ENCODE measurements at regions of chr1 and their contacts with region 1.

Region 1: DNA sequence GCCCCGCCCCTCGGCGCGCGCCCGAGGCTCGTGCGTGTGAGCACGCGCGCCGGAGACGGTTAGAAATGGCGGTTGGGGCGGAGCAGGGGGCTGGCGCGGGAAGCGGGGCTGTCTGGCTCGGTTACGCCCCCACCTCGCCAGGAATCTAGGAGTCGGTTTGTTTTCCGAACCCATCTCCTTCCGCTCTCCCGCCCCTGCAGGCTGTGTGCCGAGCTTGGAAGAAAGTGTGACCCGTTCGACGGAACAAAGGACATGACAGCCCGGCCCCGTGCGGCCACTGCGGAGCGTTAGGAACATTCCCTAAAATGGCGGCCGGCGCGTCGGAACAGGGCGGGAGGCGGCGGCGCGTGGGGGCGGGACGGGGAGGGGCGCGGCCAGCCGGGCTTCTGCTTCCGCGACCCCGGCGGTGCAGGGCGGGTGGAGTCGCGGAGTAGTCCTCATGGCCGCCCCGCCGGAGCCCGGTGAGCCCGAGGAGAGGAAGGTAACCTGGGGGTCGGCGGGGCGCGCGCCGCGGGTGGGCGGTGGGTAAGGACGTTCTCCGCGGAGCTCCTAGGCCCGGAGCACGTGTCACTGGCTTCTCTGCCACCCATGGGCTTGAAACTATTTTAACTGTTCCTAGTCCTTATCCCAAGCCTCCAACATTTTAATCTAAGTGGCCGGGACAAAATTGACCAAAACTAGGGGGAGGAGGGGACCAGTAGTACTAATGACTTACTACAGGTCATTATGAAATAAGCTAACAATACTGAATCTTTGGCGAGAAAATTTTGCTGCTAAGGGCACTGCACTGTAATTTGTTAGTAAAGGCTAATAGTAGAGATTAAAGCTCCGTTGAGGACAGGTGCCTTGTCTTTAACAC is at the start of gene COX20:
- DNase-seq: peak; percentile 70 to 94
- H3K4me3 ChIP-seq: peak within 1 kb of the TSS; percentile 75 to 87 (median 81)
- H3K27ac ChIP-seq: peak within 1 kb of the TSS; percentile 100
- H3K4me1 ChIP-seq: peaks cover 0 to 3% (median under 1%) of the 10 kb centered on the region in 4 experiments; a peak in 4 of 7 replicates
- H3K27me3 ChIP-seq: no peaks in the 10 kb centered on the region
- CTCF ChIP-seq: no peak
- EP300 ChIP-seq: no peak; a peak in 1 of 3 replicates
- POLR2A ChIP-seq: peak; percentile 66 to 94
- RAD21 ChIP-seq: peak in 1 of 2 experiments; percentile 12; a peak in 1 of 4 replicates
- total RNA-seq, gene COX20: 28.8 and 33.6 TPM in 2 replicates

Region 2: DNA sequence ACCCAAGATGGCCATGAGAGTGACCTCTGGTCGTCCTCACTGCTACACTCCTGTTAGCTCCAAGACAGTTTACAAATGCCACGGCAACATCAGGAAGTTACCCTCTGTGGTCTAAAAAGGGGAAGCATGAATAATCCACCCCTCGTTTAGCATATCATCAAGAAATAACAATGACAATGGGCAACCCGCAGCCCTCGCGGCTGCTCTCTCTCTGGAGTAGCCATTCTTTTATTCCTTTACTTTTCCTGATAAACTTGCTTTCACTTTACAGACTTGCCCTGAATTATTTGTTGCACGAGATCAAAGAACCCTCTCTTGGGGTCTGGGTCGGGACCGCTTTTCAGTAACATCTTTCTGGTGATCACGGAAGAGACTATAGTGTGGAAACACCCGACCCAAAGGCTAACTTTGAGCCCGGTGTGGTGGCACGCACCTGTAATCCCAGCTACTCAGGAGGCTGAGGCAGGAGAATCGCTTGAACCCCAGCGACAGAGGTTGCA is 19.9 kb before region 1 on chr1:
- CTCF ChIA-PET with region 1: no interaction called
- POLR2A ChIA-PET with region 1: interaction called, 178 read pairs
- DNase-seq: peak in 1 of 2 experiments; percentile 64
- H3K4me3 ChIP-seq: peak overlapping the region; percentile 16 to 59 (median 40)
- H3K27ac ChIP-seq: peak overlapping the region; percentile 69
- H3K4me1 ChIP-seq: peaks cover 1 to 11% (median 7%) of the 10 kb centered on the region in 4 experiments
- H3K27me3 ChIP-seq: no peaks in the 10 kb centered on the region
- CTCF ChIP-seq: no peak
- EP300 ChIP-seq: peak in 1 of 2 experiments; percentile 32; a peak in 1 of 3 replicates
- POLR2A ChIP-seq: peak; percentile 50 to 55
- RAD21 ChIP-seq: no peak

Region 3: GRCh38 chr1:244849189-244849866 is 13.8 kb after region 1 on chr1:
- CTCF ChIA-PET with region 1: interaction called, 11 read pairs
- POLR2A ChIA-PET with region 1: interaction called, 677 read pairs
- DNase-seq: no peak
- H3K4me3 ChIP-seq: no peak overlapping the region
- H3K27ac ChIP-seq: no peak overlapping the region
- H3K4me1 ChIP-seq: no peaks in the 10 kb centered on the region
- H3K27me3 ChIP-seq: no peaks in the 10 kb centered on the region
- CTCF ChIP-seq: no peak
- EP300 ChIP-seq: no peak
- POLR2A ChIP-seq: peak in 1 of 2 experiments; percentile 12; a peak in 1 of 3 replicates
- RAD21 ChIP-seq: no peak

Region 4: GRCh38 chr1:244864253-244865027 is 28.9 kb after region 1 on chr1 and contains the start of gene HNRNPU:
- CTCF ChIA-PET with region 1: interaction called, 3 read pairs
- POLR2A ChIA-PET with region 1: interaction called, 677 read pairs
- DNase-seq: peak; percentile 91 to 96
- H3K4me3 ChIP-seq: peak within 1 kb of the TSS; percentile 90 to 100 (median 98)
- H3K27ac ChIP-seq: peak within 1 kb of the TSS; percentile 93
- H3K4me1 ChIP-seq: peaks cover 0 to 3% (median 3%) of the 10 kb centered on the region in 4 experiments; a peak in 4 of 7 replicates
- H3K27me3 ChIP-seq: no peaks in the 10 kb centered on the region
- CTCF ChIP-seq: peak in 1 of 3 experiments; percentile 8; a peak in 1 of 4 replicates
- EP300 ChIP-seq: peak in 1 of 2 experiments; percentile 4; a peak in 1 of 3 replicates
- POLR2A ChIP-seq: peak; percentile 83 to 86
- RAD21 ChIP-seq: 0 out of 4 replicates have a peak, but pooled peaks of 1 of the 2 experiments have one; percentile 4
- total RNA-seq, gene HNRNPU: 606 and 614 TPM in 2 replicates

Region 5: DNA sequence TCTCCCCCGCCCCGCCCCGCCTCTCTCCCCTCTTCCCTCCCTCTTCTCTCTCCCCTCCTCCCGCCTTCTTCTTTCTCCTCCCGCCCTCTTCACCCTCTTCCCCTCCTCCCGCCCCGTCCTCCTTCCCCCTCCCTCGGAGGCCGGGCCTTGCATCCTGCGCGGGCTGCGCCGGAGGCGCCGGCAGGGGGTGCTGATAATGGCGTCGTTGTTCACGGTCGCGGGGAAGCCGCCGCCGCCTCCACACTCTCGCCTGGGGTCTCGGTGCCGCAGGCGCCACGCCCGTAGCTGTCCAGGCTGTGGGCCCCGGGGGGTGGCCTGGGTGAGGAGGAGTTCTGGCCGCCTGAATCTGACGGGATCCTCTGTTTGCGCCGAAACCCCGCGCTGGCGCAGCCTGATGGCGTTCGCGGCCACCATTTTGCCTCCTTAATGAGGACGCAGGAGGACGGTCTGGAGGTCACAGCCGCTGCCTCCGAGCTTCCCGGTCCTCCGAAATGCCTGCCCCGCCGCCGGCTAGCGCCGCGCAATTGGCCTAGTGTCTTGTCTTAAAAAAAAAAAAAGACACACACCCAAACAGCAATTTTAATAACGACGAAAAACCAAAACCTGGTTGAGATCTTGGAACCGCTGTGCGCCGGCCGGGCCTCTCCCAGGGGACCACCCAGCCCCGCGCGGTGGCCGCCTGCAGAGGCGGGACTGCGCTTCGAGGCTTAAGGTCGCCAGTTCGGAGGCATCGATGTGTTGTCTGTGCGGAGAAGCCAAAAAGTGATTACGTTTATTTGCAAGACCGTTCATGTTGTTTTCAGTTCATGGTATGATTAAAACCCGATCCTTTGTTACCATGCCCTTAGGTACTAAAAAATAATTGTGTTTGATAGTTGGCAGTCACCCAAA is 135.4 kb after region 1 on chr1:
- CTCF ChIA-PET with region 1: no interaction called
- POLR2A ChIA-PET with region 1: interaction called, 23 read pairs
- DNase-seq: peak; percentile 84 to 96
- H3K4me3 ChIP-seq: peak overlapping the region; percentile 65 to 88 (median 76)
- H3K27ac ChIP-seq: peak overlapping the region; percentile 99
- H3K4me1 ChIP-seq: peaks cover 3 to 9% (median 7%) of the 10 kb centered on the region in 4 experiments; a peak in 6 of 7 replicates
- H3K27me3 ChIP-seq: no peaks in the 10 kb centered on the region
- CTCF ChIP-seq: peak; percentile 24 to 43 (median 24); a peak in 3 of 4 replicates
- EP300 ChIP-seq: peak in 1 of 2 experiments; percentile 40; a peak in 2 of 3 replicates
- POLR2A ChIP-seq: peak; percentile 90 to 93
- RAD21 ChIP-seq: peak in 1 of 2 experiments; percentile 17; a peak in 2 of 4 replicates